ENCODE measurements at regions of chr18 and their contacts with region 1.

Region 1: GRCh38 chr18:62714671-62715435 is 488 bp upstream of the PHLPP1 start:
- DNase-seq: peak; percentile 95
- ATAC-seq: peak; percentile 74
- H3K4me3 Mint-ChIP-seq: peak overlapping the region; percentile 84
- H3K27ac Mint-ChIP-seq: peak overlapping the region; percentile 77
- H3K4me1 Mint-ChIP-seq: peaks cover 34% of the 10 kb centered on the region
- H3K27me3 Mint-ChIP-seq: peaks cover 4% of the 10 kb centered on the region

Region 2: GRCh38 chr18:62584241-62585120 is 130.4 kb before region 1 on chr18:
- CTCF ChIA-PET with region 1: interaction called, 10 read pairs
- DNase-seq: peak; percentile 92
- ATAC-seq: peak; percentile 83
- H3K4me3 Mint-ChIP-seq: peak overlapping the region; percentile 9
- H3K27ac Mint-ChIP-seq: peak overlapping the region; percentile 96
- H3K4me1 Mint-ChIP-seq: peaks cover 56% of the 10 kb centered on the region
- H3K27me3 Mint-ChIP-seq: no peaks in the 10 kb centered on the region

Region 3: DNA sequence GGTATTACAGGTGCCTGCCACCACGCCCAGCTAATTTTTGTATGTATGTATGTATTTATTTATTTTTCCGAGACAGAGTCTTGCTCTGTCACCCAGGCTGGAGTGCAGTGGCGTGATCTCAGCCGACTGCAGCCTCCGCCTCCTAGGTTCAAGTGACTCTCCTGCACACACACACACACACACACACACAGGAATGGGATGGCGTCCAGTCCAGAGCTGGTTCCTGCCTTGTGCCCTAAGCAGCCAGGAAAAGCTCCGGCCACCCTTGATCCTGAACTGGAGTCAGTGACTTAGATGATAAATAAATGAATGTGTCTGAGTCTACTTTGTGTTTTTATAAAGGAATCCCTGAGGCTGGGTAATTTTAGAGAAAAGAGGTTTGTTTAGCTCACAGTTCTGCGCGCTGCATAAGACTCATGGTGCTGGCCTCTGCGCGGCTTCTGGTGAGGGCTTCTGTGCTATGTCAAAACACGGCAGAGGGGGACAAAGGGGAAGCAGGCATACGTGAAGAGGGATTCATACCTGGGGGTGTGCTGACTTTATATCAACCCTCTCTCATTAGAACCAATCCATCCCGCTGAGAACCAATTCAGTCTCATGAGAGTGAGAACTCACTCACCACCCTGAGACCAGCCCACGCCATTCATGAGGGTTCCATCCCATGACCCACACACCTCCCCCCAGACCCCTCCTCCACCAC is 59.2 kb before region 1 on chr18:
- CTCF ChIA-PET with region 1: no interaction called
- DNase-seq: no peak
- ATAC-seq: no peak
- H3K4me3 Mint-ChIP-seq: no peak overlapping the region
- H3K27ac Mint-ChIP-seq: no peak overlapping the region
- H3K4me1 Mint-ChIP-seq: no peaks in the 10 kb centered on the region
- H3K27me3 Mint-ChIP-seq: peaks cover 20% of the 10 kb centered on the region

Region 4: GRCh38 chr18:62957885-62958472 is 243.1 kb after region 1 on chr18:
- CTCF ChIA-PET with region 1: interaction called, 67 read pairs
- DNase-seq: peak; percentile 66
- ATAC-seq: peak; percentile 73
- H3K4me3 Mint-ChIP-seq: no peak overlapping the region
- H3K27ac Mint-ChIP-seq: no peak overlapping the region
- H3K4me1 Mint-ChIP-seq: peaks cover 15% of the 10 kb centered on the region
- H3K27me3 Mint-ChIP-seq: no peaks in the 10 kb centered on the region

Measured in activated CD8-positive, alpha-beta memory T cell treated with anti-CD3 and anti-CD28 coated beads, Interleukin-2, amount 10 ng/mL, durations not matched to agents 7 days and 5 days (primary cell).